Dorsolateral prefrontal cortex (tissue), 120 donors: ENCODE measurements at regions of chr14 and their contacts with region 1.

Region 1: GRCh38 chr14:60980811-60981632 is at the starts of genes SLC38A6 and TRMT5:
- DNase-seq: peak; percentile 91 to 96 (median 95)
- H3K4me3 ChIP-seq: peak within 1 kb of the TSS; percentile 66 to 99 (median 87)
- H3K27ac ChIP-seq: peak within 1 kb of the TSS in 57 of 59 donors; percentile 11 to 92 (median 76)
- H3K27me3 ChIP-seq: no peaks in the 10 kb centered on the region
- CTCF ChIP-seq: peak in 25 of 56 donors; percentile 2 to 52 (median 28)
- total RNA-seq, gene SLC38A6: 28.6 to 67.0 (median 46.5) TPM
- total RNA-seq, gene TRMT5: 6.8 to 21.8 (median 12.5) TPM

Region 2: GRCh38 chr14:60723243-60724136 is 257.5 kb before region 1 on chr14:
- intact Hi-C with region 1: loop called in 1 of 2 experiments (anchors 2 kb)
- DNase-seq: peak in 6 of 10 donors; percentile 19 to 56 (median 40)
- H3K4me3 ChIP-seq: peak overlapping the region; percentile 59 to 94 (median 78)
- H3K27ac ChIP-seq: peak overlapping the region in 45 of 59 donors; percentile 3 to 86 (median 61)
- H3K27me3 ChIP-seq: peaks cover 0 to 25% (median 0%) of the 10 kb centered on the region in 45 donors
- CTCF ChIP-seq: peak in 1 of 56 donors; percentile 9

Region 3: DNA sequence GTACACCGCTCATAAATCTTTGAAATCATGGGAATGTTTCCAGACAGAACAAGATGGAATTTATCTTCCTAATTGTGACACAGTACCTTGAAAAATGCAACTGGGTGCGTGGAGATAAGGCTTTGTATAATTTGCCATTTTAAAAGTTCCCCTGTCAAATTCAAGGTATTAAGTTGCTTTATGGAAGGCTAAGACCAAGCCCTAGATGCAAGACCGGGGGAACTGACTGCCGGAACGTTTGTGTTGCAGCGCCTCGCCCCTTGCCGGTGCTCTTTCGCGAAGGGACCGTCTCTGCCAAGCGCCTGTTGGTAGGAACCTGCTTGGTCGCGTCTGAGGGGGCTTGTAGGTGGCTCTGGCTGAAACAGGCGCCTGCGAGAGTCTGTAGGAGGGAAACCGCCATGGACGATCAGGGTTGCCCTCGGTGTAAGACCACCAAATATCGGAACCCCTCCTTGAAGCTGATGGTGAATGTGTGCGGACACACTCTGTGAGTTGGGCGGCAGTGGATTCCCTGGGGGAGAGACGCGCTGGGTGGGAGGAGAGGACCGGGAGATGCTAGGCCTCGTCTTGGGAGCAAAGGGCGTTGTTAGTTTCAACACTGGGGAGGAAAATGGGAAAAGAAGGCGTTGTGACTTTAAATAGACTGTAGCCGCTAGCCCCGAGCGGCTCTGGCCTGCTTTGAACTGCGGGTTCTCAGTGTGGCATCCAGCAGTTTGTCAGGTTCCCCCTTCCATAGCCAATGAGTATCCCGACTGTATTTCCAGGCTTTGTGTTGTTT is 246.4 kb before region 1 on chr14 and contains the start of gene MNAT1:
- intact Hi-C with region 1: loop called in 1 of 2 experiments (anchors 10 kb)
- DNase-seq: peak; percentile 59 to 88 (median 82)
- H3K4me3 ChIP-seq: peak within 1 kb of the TSS; percentile 62 to 99 (median 84)
- H3K27ac ChIP-seq: peak within 1 kb of the TSS in 55 of 59 donors; percentile 6 to 91 (median 69)
- H3K27me3 ChIP-seq: no peaks in the 10 kb centered on the region
- CTCF ChIP-seq: peak in 38 of 56 donors; percentile 6 to 49 (median 27)
- total RNA-seq, gene MNAT1: 45.5 to 88.5 (median 66.3) TPM